Heart right ventricle (tissue), 16 donors: ENCODE measurements at regions of chr6 and their contacts with region 1.

Region 1: GRCh38 chr6:39892490-39893129 is 41.7 kb downstream of the MOCS1 start:
- DNase-seq: peak; percentile 55 to 72
- ATAC-seq: peak; percentile 31 to 76 (median 68)
- H3K4me3 ChIP-seq: no peak overlapping the region
- H3K27ac ChIP-seq: no peak overlapping the region
- H3K4me1 ChIP-seq: peaks cover 4 to 33% (median 18%) of the 10 kb centered on the region in 9 donors
- H3K27me3 ChIP-seq: no peaks in the 10 kb centered on the region
- CTCF ChIP-seq: peak; percentile 50 to 77 (median 75)

Region 2: DNA sequence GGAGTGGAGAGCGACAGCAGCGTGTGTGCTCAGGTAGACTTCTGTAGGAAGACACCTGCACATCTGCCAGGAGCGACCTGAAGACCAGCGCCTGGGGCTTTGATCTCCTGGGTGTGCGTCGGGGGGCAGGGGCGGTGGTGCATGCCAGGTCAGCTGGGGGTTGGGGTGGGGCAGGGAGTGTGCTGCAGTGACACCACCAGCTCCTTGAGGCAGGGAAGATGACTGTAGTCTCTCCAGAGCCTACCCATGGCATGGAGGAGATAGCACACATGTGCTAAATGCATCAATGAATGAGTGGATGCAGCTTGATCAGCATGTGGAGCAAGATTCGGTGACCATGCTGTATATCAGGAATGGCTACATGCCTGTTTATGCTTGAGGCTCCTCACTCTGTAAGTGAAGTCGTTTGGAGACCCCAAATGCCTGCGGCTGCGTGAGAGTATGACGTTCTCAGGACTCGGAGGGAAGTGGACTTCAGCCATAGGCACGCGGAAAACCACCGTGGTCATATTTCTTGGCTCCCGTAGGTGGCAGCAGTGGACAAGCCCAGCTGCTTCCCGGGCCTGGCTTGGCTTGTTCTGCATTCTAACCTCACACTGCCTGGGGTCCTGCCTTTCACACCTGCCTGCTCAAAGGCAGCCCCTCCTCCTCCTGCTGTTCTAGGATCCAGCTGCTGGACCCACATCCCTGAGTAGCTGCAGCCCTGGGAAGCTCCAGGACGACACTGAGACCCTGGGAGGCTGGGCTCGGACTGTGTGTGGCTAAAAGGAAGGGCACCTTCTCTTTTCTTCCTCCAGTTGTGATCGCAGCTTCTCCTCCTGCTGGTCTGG is 530.7 kb before region 1 on chr6:
- intact Hi-C with region 1: loop called in 1 of 10 experiments (anchors 5 kb)
- DNase-seq: peak; percentile 48 to 56
- ATAC-seq: peak; percentile 65 to 87 (median 80)
- H3K4me3 ChIP-seq: no peak overlapping the region
- H3K27ac ChIP-seq: no peak overlapping the region
- H3K4me1 ChIP-seq: peaks cover 0 to 15% (median 6%) of the 10 kb centered on the region in 9 donors
- H3K27me3 ChIP-seq: no peaks in the 10 kb centered on the region
- CTCF ChIP-seq: peak; percentile 68 to 84 (median 78)

Region 3: DNA sequence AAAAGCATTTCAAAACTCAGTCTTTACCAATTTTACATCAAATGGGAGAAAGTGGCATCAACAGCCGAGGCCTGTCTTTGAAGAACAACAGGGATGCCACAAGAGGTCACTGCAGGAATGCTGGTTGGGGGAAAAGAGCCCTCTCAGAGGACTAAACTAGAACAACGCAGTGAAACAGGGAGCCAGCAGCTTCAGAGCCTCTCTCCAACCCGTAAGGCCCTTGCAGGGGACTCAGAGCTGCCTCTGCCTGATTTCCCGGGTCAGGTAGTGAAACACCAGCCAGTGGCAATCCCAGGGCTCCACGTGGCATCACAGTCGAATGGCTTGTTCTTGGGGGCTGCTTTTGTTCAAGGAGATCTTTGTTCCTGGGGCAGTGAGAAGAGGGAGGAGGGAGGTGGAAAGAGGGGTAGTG is 515.1 kb before region 1 on chr6:
- intact Hi-C with region 1: loop called (anchors 1 to 10 kb)
- DNase-seq: peak; percentile 25 to 71
- ATAC-seq: peak; percentile 78 to 90 (median 88)
- H3K4me3 ChIP-seq: no peak overlapping the region
- H3K27ac ChIP-seq: no peak overlapping the region
- H3K4me1 ChIP-seq: peaks cover 0 to 14% (median 0%) of the 10 kb centered on the region in 9 donors
- H3K27me3 ChIP-seq: no peaks in the 10 kb centered on the region
- CTCF ChIP-seq: peak; percentile 41 to 80 (median 70)

Region 4: DNA sequence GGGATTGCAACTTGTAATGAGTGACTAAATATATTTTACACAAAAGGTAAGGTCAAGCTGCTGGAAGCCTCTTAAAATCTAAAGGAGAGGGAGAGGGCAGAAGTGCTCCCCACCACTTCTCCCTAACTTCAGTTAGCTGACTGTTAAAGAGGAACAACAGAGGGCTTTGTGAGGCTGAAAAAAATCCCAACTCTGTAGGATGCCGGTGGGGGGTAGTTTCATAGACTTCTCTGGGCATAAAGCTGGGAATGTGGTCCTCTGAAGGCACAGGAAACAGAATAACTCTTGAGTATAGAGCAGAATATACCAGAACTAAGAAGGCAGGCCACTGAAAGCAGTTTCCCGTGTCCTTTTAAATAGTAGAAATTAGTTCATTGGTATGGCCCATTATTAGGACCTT is 239.0 kb before region 1 on chr6:
- intact Hi-C with region 1: no loop called
- DNase-seq: no peak
- ATAC-seq: no peak
- H3K4me3 ChIP-seq: no peak overlapping the region
- H3K27ac ChIP-seq: no peak overlapping the region
- H3K4me1 ChIP-seq: no peaks in the 10 kb centered on the region
- H3K27me3 ChIP-seq: no peaks in the 10 kb centered on the region
- CTCF ChIP-seq: no peak